Natural killer cell (primary cell): ENCODE measurements at regions of chr2 and their contacts with region 1.

Region 1: DNA sequence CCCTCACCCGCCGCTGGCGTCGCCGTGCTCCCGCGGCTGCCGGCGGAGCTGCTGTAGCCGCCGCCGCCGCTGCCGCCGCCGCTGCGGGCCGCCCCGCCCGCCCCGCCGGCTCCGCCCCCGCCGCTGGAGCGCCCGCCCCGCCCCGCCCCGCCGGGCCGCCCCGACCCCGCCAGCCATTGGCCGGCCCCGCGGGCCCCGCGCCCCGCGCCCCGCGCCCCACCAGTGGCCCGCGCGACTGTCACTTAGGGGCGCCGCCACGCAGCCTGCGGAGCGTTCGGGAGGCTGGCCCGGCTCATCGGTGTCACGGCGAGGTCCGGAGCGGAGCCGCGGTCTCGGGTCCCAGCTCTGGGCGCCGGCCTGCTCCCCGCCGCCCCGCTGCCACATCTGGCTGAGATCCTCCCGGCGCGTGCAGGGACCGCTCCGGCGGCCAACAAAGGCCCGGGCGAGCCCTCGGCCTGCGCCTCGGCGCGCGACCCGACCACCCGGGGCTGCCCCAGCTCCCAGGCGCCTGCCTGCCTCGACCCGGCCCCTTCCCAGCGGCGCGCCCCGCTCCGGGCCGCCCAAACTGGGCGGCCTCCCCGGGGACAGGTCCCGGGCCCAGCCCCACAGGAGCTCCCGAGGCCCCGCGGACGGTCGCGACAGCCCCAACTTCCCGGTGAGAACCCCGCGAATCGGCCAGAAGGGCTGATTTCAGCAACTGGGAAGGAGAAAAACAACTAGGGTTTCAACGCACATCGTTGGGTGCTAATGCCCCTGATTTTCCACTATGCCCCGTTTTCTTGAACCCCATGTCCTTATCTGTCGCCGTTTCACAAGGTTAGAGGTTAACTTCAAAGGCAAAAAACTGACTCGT is at the start of gene MGAT4A:
- DNase-seq: peak; percentile 76 to 89
- ATAC-seq: peak; percentile 90 to 97 (median 92)
- H3K4me3 ChIP-seq: peak within 1 kb of the TSS; percentile 77
- H3K4me3 Mint-ChIP-seq: peak within 1 kb of the TSS; percentile 92
- H3K27ac ChIP-seq: peak within 1 kb of the TSS; percentile 57
- H3K27ac Mint-ChIP-seq: peak within 1 kb of the TSS; percentile 83 to 88
- H3K4me1 ChIP-seq: peaks cover 25% of the 10 kb centered on the region
- H3K4me1 Mint-ChIP-seq: peaks cover 61 to 66% of the 10 kb centered on the region in 2 donors
- H3K27me3 ChIP-seq: no peaks in the 10 kb centered on the region
- H3K27me3 Mint-ChIP-seq: no peaks in the 10 kb centered on the region
- CTCF ChIP-seq: no peak
- total RNA-seq, gene MGAT4A: 91.6 to 114 (median 96.4) TPM

Region 2: DNA sequence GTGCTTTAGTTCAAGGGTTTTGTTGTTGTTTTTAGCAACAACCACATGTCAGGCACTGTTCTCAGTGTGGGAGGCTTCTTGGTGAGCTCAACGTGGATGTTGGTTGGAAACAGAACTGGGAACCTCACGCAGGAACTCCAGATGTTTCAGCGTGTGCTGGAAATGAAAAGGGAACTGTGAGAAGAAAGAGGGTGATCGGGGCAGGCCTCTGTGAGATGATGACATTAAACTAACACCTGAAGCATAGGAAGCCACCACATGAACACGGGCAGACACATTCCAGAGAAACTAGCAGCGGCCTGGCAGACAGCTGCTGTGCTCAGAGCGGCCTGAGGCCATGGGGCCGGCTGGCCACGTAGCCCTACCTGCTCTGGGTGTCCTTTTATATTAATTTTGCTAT is 189.4 kb before region 1 on chr2:
- intact Hi-C with region 1: no loop called
- DNase-seq: no peak
- ATAC-seq: no peak
- H3K4me3 ChIP-seq: no peak overlapping the region
- H3K4me3 Mint-ChIP-seq: no peak overlapping the region
- H3K27ac ChIP-seq: no peak overlapping the region
- H3K27ac Mint-ChIP-seq: peak overlapping the region in 1 of 2 donors; percentile 57
- H3K4me1 ChIP-seq: peaks cover 2% of the 10 kb centered on the region
- H3K4me1 Mint-ChIP-seq: peaks cover 10 to 12% of the 10 kb centered on the region in 2 donors
- H3K27me3 ChIP-seq: no peaks in the 10 kb centered on the region
- H3K27me3 Mint-ChIP-seq: no peaks in the 10 kb centered on the region
- CTCF ChIP-seq: no peak

Region 3: DNA sequence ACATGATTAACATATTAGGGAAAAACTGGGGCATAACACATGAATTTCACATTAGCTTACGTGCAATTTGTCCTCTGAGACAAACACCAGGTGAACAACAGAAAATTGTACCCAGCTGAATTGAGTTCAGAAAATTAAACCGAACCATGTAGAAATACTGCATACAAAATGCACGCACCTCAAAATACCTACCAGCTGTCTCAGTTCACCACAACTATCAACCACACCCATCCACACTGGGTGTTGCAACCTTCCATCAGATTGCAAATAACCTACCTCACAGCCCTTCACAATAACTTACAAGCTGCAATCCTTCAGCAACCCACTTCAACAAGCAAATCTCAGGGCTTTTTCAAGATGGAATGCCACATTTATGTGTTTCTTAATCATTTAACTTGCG is 66.9 kb before region 1 on chr2:
- intact Hi-C with region 1: loop called (anchors 2 kb)
- DNase-seq: peak; percentile 26 to 81
- ATAC-seq: peak; percentile 43 to 69 (median 57)
- H3K4me3 ChIP-seq: peak overlapping the region; percentile 57
- H3K4me3 Mint-ChIP-seq: peak overlapping the region; percentile 91
- H3K27ac ChIP-seq: peak overlapping the region; percentile 92
- H3K27ac Mint-ChIP-seq: peak overlapping the region; percentile 90 to 96
- H3K4me1 ChIP-seq: peaks cover 21% of the 10 kb centered on the region
- H3K4me1 Mint-ChIP-seq: peaks cover 58 to 60% of the 10 kb centered on the region in 2 donors
- H3K27me3 ChIP-seq: no peaks in the 10 kb centered on the region
- H3K27me3 Mint-ChIP-seq: no peaks in the 10 kb centered on the region
- CTCF ChIP-seq: no peak

Region 4: GRCh38 chr2:98771721-98772524 is 40.7 kb after region 1 on chr2:
- intact Hi-C with region 1: loop called (anchors 2 kb)
- DNase-seq: peak; percentile 28 to 91
- ATAC-seq: peak; percentile 79 to 85 (median 81)
- H3K4me3 ChIP-seq: peak overlapping the region; percentile 21
- H3K4me3 Mint-ChIP-seq: peak overlapping the region; percentile 80
- H3K27ac ChIP-seq: peak overlapping the region; percentile 86
- H3K27ac Mint-ChIP-seq: peak overlapping the region; percentile 83 to 97
- H3K4me1 ChIP-seq: peaks cover 63% of the 10 kb centered on the region
- H3K4me1 Mint-ChIP-seq: peaks cover 44 to 49% of the 10 kb centered on the region in 2 donors
- H3K27me3 ChIP-seq: no peaks in the 10 kb centered on the region
- H3K27me3 Mint-ChIP-seq: no peaks in the 10 kb centered on the region
- CTCF ChIP-seq: no peak

Region 5: GRCh38 chr2:98822301-98823164 is 91.3 kb after region 1 on chr2:
- intact Hi-C with region 1: loop called (anchors 10 kb)
- DNase-seq: peak; percentile 64 to 83
- ATAC-seq: peak; percentile 89 to 92 (median 92)
- H3K4me3 ChIP-seq: peak overlapping the region; percentile 51
- H3K4me3 Mint-ChIP-seq: peak overlapping the region; percentile 85
- H3K27ac ChIP-seq: peak overlapping the region; percentile 26
- H3K27ac Mint-ChIP-seq: peak overlapping the region in 1 of 2 donors; percentile 73
- H3K4me1 ChIP-seq: peaks cover 8% of the 10 kb centered on the region
- H3K4me1 Mint-ChIP-seq: peaks cover 12 to 14% of the 10 kb centered on the region in 2 donors
- H3K27me3 ChIP-seq: no peaks in the 10 kb centered on the region
- H3K27me3 Mint-ChIP-seq: no peaks in the 10 kb centered on the region
- CTCF ChIP-seq: peak; percentile 53